Body of pancreas (tissue), 4 donors: ENCODE measurements at regions of chr12 and their contacts with region 1.

Region 1: GRCh38 chr12:12272869-12273268 is 6.0 kb upstream of the LRP6 start:
- DNase-seq: no peak
- ATAC-seq: no peak
- H3K4me3 ChIP-seq: no peak overlapping the region
- H3K27ac ChIP-seq: no peak overlapping the region
- H3K4me1 ChIP-seq: peaks cover 2% of the 10 kb centered on the region
- H3K27me3 ChIP-seq: no peaks in the 10 kb centered on the region
- CTCF ChIP-seq: no peak
- POLR2A ChIP-seq: no peak

Region 2: GRCh38 chr12:12334367-12335040 is 61.6 kb after region 1 on chr12:
- intact Hi-C with region 1: loop called (anchors 10 kb)
- DNase-seq: peak; percentile 48 to 71 (median 53)
- ATAC-seq: peak; percentile 21
- H3K4me3 ChIP-seq: no peak overlapping the region
- H3K27ac ChIP-seq: peak overlapping the region in 3 of 4 donors; percentile 69 to 83 (median 71)
- H3K4me1 ChIP-seq: peaks cover 51% of the 10 kb centered on the region
- H3K27me3 ChIP-seq: no peaks in the 10 kb centered on the region
- CTCF ChIP-seq: peak; percentile 59 to 84 (median 70)
- POLR2A ChIP-seq: no peak

Region 3: GRCh38 chr12:12432364-12432763 is 159.5 kb after region 1 on chr12:
- intact Hi-C with region 1: no loop called
- DNase-seq: peak in 2 of 4 donors; percentile 57 to 69
- ATAC-seq: peak; percentile 83
- H3K4me3 ChIP-seq: no peak overlapping the region
- H3K27ac ChIP-seq: peak overlapping the region in 3 of 4 donors; percentile 39 to 72 (median 58)
- H3K4me1 ChIP-seq: peaks cover 22% of the 10 kb centered on the region
- H3K27me3 ChIP-seq: no peaks in the 10 kb centered on the region
- CTCF ChIP-seq: no peak
- POLR2A ChIP-seq: no peak